Naive thymus-derived CD4-positive, alpha-beta T cell (primary cell): ENCODE measurements at regions of chr6 and their contacts with region 1.

Region 1: DNA sequence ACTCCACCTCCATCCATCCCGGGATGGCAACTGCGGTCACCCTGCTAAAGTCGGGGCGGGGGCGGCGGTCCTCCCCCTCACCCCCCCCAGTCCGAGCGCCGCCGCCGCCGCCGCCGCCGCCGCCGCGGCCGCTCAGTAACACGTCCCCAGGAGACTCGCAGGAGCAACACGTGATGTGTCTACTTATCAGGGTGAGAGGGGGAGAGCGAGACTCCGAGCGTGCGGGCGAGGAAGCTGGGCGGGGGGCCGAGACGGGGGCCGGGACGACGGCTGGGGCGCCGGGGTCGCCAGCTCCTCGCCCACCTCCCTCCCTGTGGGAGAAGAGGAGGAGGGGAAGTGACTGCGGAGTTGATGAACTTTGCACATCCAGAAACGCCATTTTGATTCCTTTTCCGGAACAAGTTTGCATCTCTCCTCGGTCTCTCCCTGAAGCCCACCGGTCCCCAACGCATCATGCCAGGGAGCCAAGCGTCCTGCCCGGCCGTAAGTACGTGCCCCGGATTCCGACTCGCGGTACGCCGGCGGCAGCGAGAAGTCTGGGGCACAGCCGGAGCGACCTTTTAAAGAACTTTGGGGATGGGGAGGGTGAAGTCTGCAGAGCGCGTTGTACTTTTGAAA is at the start of gene RREB1:
- DNase-seq: peak; percentile 37 to 68 (median 60)
- ATAC-seq: peak; percentile 70
- H3K4me3 ChIP-seq: peak within 1 kb of the TSS; percentile 90
- H3K4me3 Mint-ChIP-seq: peak within 1 kb of the TSS; percentile 84 to 97 (median 95)
- H3K27ac ChIP-seq: peak within 1 kb of the TSS; percentile 82
- H3K27ac Mint-ChIP-seq: peak within 1 kb of the TSS; percentile 88 to 98 (median 95)
- H3K4me1 ChIP-seq: peaks cover 13 to 24% of the 10 kb centered on the region in 2 donors
- H3K4me1 Mint-ChIP-seq: peaks cover 26 to 41% (median 38%) of the 10 kb centered on the region in 7 donors
- H3K27me3 ChIP-seq: no peaks in the 10 kb centered on the region
- H3K27me3 Mint-ChIP-seq: peaks cover 0 to 7% (median 0%) of the 10 kb centered on the region in 5 donors
- total RNA-seq, gene RREB1: 28.3 to 56.7 (median 51.6) TPM

Region 2: DNA sequence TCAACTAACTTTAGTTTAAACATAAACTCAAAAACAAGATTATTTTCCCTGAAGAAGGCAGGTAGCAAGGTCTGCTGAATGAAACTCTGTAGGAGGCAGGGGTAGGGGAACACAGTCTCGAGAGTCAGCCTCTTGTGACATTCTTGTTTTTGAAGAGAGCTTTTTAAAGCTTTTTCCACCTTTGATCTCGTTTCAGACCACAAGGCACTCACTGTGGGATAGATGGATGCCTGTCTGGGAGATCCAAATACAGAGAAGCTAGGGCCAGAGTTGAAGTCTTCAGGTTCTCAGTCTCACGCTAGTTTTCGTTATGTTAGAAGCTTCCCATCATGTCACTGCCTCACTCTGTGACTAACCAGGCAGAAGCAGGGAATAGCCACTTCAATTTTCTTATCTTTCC is 802.1 kb before region 1 on chr6:
- CTCF ChIA-PET with region 1: no interaction called
- POLR2A ChIA-PET with region 1: no interaction called
- intact Hi-C with region 1: no loop called
- DNase-seq: no peak
- ATAC-seq: no peak
- H3K4me3 ChIP-seq: no peak overlapping the region
- H3K4me3 Mint-ChIP-seq: no peak overlapping the region
- H3K27ac ChIP-seq: no peak overlapping the region
- H3K27ac Mint-ChIP-seq: no peak overlapping the region
- H3K4me1 ChIP-seq: no peaks in the 10 kb centered on the region
- H3K4me1 Mint-ChIP-seq: no peaks in the 10 kb centered on the region
- H3K27me3 ChIP-seq: no peaks in the 10 kb centered on the region
- H3K27me3 Mint-ChIP-seq: peaks cover 12 to 48% (median 25%) of the 10 kb centered on the region in 5 donors

Region 3: DNA sequence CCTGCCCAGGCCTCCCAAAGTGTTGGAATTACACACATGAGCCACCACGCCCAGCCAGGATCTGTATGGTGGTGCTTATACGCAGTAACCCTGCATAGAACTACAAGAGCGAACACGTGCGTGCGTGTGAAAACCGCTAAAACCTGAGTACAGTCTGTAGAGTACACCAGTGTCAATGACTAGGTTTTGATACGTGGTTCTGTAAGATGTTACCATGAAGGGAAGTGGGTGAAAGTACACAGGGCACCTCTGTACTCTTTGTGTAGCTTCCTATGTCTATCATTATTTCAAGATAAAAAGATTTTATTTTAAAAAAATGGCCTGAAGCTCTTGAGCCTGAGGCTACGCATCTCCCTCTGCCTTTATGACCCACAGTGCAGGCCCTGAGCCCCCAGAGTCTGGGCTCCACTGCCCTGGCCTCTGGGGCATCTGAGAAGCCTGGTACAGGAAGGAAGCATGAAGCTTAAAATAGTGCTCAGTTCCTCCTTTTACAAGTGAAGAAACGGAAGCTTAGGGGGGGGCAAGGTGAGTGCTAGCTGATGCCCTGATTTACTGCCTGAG is 497.6 kb before region 1 on chr6:
- CTCF ChIA-PET with region 1: no interaction called
- POLR2A ChIA-PET with region 1: no interaction called
- intact Hi-C with region 1: loop called in 1 of 2 experiments (anchors 5 kb)
- DNase-seq: peak in 7 of 9 donors; percentile 70 to 88 (median 81)
- ATAC-seq: peak; percentile 84
- H3K4me3 ChIP-seq: peak overlapping the region; percentile 25
- H3K4me3 Mint-ChIP-seq: peak overlapping the region; percentile 29 to 83 (median 72)
- H3K27ac ChIP-seq: peak overlapping the region; percentile 65
- H3K27ac Mint-ChIP-seq: peak overlapping the region; percentile 81 to 100 (median 96)
- H3K4me1 ChIP-seq: peaks cover 51 to 61% of the 10 kb centered on the region in 2 donors
- H3K4me1 Mint-ChIP-seq: peaks cover 45 to 86% (median 68%) of the 10 kb centered on the region in 7 donors
- H3K27me3 ChIP-seq: no peaks in the 10 kb centered on the region
- H3K27me3 Mint-ChIP-seq: no peaks in the 10 kb centered on the region

Region 4: DNA sequence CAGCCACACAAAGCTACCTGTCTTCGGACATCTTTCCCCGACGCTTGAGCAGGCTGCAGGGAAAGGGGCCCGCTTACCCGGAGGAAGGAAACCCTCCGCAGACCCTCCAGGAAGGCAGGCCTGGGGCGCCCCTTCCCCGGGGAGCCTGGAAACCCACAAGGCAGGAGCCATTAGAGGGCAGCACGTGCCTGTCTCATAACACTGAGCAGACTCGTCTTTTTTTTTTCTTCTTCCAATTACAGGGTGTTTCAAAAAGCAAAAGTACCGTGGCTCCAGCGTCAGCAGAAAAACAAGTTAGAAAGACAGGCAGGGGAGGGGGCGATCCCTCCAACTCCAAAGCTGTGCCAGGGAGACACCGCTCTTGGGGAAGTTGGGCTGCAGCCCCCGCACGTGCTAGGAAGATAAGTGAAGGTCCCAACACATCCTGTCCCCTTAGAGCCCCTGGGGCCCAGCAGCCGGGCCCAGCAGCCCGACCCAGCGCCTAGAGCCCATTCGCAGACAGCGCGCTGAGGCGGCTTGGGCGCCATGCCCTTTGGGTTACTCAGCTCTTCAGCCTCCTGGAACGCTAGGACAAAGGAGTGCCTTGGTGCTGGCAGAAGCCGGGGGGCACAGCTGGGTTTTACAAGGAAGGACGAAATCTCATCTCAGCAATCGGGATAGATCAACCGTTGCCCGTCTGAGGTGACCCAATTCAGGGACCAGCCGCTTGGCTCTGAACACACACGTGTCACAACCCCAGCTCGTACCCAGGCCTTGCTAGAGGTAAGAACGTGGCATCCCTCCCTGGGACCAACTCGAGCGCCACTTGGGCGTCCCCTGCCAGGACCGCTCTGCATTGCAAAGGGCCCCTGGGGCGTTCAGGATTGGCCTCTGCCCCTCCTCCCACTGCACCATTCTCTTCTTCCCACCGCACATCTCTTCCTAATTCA is 382.9 kb before region 1 on chr6:
- CTCF ChIA-PET with region 1: no interaction called
- POLR2A ChIA-PET with region 1: no interaction called
- intact Hi-C with region 1: loop called in 1 of 2 experiments (anchors 2 kb)
- DNase-seq: peak; percentile 33 to 74 (median 62)
- ATAC-seq: peak; percentile 82
- H3K4me3 ChIP-seq: peak overlapping the region; percentile 44
- H3K4me3 Mint-ChIP-seq: peak overlapping the region; percentile 67 to 89 (median 81)
- H3K27ac ChIP-seq: no peak overlapping the region
- H3K27ac Mint-ChIP-seq: peak overlapping the region; percentile 47 to 84 (median 74)
- H3K4me1 ChIP-seq: peaks cover 0 to 5% of the 10 kb centered on the region in 2 donors
- H3K4me1 Mint-ChIP-seq: peaks cover 6 to 28% (median 12%) of the 10 kb centered on the region in 7 donors
- H3K27me3 ChIP-seq: no peaks in the 10 kb centered on the region
- H3K27me3 Mint-ChIP-seq: peaks cover 0 to 43% (median 0%) of the 10 kb centered on the region in 5 donors

Region 5: DNA sequence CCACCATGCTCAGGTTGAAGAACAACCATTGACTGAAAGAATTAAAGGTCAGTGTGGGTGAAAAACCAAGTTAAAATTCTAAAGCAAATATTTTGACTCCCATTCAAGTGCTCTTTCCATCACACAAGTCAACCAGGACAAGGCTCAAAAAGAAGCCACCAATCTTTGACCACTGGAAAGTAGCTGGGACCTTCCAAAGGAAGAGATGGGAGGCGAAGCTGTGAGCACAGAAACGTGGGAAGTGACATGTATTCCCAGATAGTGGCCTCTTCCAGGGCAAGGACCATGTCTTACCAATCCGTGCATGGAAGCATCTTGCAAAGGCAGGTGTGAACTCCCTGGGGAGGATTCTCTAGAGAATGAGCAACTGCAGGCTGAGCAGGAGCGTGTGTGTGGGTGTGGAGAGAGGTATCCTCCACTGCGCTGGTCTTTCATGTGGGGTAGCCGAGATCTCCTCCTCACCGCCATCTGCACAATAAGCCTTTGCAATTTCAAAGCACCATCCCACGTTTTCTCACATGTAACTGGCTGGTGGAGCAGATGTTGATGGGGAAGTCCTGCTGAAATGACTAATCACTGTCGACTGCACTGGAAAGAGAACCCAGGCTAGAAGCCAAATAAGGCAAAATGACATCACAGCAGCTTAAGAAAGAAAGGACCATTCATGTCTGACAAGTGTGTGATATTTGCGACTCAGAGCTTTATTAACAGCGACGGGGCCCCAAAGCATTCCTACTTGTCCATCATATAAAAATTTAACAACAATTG is 189.3 kb before region 1 on chr6:
- CTCF ChIA-PET with region 1: no interaction called
- POLR2A ChIA-PET with region 1: no interaction called
- intact Hi-C with region 1: loop called in 1 of 2 experiments (anchors 5 kb)
- DNase-seq: peak in 5 of 9 donors; percentile 12 to 74 (median 19)
- ATAC-seq: peak; percentile 77
- H3K4me3 ChIP-seq: no peak overlapping the region
- H3K4me3 Mint-ChIP-seq: peak overlapping the region in 1 of 10 donors; percentile 8
- H3K27ac ChIP-seq: no peak overlapping the region
- H3K27ac Mint-ChIP-seq: peak overlapping the region in 1 of 9 donors; percentile 46
- H3K4me1 ChIP-seq: peaks cover 0 to 10% of the 10 kb centered on the region in 2 donors
- H3K4me1 Mint-ChIP-seq: peaks cover 7 to 25% (median 20%) of the 10 kb centered on the region in 7 donors
- H3K27me3 ChIP-seq: no peaks in the 10 kb centered on the region
- H3K27me3 Mint-ChIP-seq: peaks cover 0 to 29% (median 0%) of the 10 kb centered on the region in 5 donors

Region 6: DNA sequence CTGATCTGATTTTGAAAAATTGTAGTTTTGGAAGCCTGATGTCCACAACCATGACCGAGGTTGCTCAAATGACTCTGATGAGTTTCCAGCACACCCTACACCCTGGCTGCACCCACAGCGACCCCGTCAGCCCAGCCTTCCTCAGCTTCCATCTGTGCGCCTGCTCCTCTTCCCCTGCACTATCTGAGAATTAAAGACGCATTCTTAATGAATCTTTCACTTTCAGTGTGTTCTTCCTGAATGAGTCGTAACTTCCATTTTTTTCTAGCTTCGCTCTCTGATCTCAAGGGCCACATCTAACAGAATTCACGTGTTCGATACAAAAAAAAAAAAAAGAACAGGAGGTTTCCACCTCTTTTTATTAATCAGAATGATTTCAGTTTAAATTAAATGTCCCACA is 21.2 kb before region 1 on chr6:
- CTCF ChIA-PET with region 1: interaction called, 9 read pairs
- POLR2A ChIA-PET with region 1: interaction called, 15 read pairs
- intact Hi-C with region 1: loop called (anchors 1 kb)
- DNase-seq: peak in 8 of 9 donors; percentile 10 to 62 (median 56)
- ATAC-seq: peak; percentile 79
- H3K4me3 ChIP-seq: peak overlapping the region; percentile 29
- H3K4me3 Mint-ChIP-seq: peak overlapping the region; percentile 77 to 93 (median 83)
- H3K27ac ChIP-seq: peak overlapping the region; percentile 58
- H3K27ac Mint-ChIP-seq: peak overlapping the region; percentile 62 to 95 (median 89)
- H3K4me1 ChIP-seq: peaks cover 20 to 27% of the 10 kb centered on the region in 2 donors
- H3K4me1 Mint-ChIP-seq: peaks cover 21 to 42% (median 39%) of the 10 kb centered on the region in 7 donors
- H3K27me3 ChIP-seq: no peaks in the 10 kb centered on the region
- H3K27me3 Mint-ChIP-seq: peaks cover 0 to 65% (median 0%) of the 10 kb centered on the region in 5 donors

Region 7: GRCh38 chr6:7145885-7146828 is 38.5 kb after region 1 on chr6:
- CTCF ChIA-PET with region 1: no interaction called
- POLR2A ChIA-PET with region 1: interaction called, 23 read pairs
- intact Hi-C with region 1: loop called in 1 of 2 experiments (anchors 1 kb)
- DNase-seq: no peak
- ATAC-seq: peak; percentile 71
- H3K4me3 ChIP-seq: peak overlapping the region; percentile 10
- H3K4me3 Mint-ChIP-seq: peak overlapping the region; percentile 70 to 83 (median 82)
- H3K27ac ChIP-seq: peak overlapping the region; percentile 63
- H3K27ac Mint-ChIP-seq: peak overlapping the region; percentile 55 to 96 (median 89)
- H3K4me1 ChIP-seq: peaks cover 17 to 27% of the 10 kb centered on the region in 2 donors
- H3K4me1 Mint-ChIP-seq: peaks cover 50 to 89% (median 76%) of the 10 kb centered on the region in 7 donors
- H3K27me3 ChIP-seq: no peaks in the 10 kb centered on the region
- H3K27me3 Mint-ChIP-seq: no peaks in the 10 kb centered on the region

Region 8: DNA sequence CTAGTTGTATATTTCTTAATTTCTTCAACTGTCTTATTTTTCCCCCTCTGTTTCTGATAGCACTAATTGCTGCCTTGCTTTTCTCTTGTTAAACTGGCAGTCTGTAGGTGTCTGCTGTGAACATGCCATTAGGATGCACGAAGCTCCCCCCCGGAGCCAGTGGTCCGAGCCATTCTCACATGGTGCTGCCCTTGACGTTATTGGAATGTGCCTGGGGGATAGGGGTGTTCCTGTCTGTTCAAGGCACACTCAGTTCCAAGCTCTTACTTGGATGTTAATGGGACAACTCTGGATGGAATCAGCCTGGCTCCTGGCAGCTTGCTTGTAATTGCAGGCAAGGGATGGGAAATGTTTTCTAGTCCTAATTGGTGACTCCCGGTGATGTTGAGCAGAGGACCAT is 68.5 kb after region 1 on chr6:
- CTCF ChIA-PET with region 1: no interaction called
- POLR2A ChIA-PET with region 1: no interaction called
- intact Hi-C with region 1: no loop called
- DNase-seq: no peak
- ATAC-seq: no peak
- H3K4me3 ChIP-seq: no peak overlapping the region
- H3K4me3 Mint-ChIP-seq: no peak overlapping the region
- H3K27ac ChIP-seq: no peak overlapping the region
- H3K27ac Mint-ChIP-seq: no peak overlapping the region
- H3K4me1 ChIP-seq: no peaks in the 10 kb centered on the region
- H3K4me1 Mint-ChIP-seq: peaks cover 5 to 24% (median 19%) of the 10 kb centered on the region in 7 donors
- H3K27me3 ChIP-seq: no peaks in the 10 kb centered on the region
- H3K27me3 Mint-ChIP-seq: no peaks in the 10 kb centered on the region

Region 9: GRCh38 chr6:7312616-7313504 is 205.2 kb after region 1 on chr6 and contains the start of gene SSR1:
- CTCF ChIA-PET with region 1: no interaction called
- POLR2A ChIA-PET with region 1: no interaction called
- intact Hi-C with region 1: loop called in 1 of 2 experiments (anchors 2 kb)
- DNase-seq: peak; percentile 76 to 97 (median 84)
- ATAC-seq: peak; percentile 99
- H3K4me3 ChIP-seq: peak within 1 kb of the TSS; percentile 66
- H3K4me3 Mint-ChIP-seq: peak within 1 kb of the TSS; percentile 83 to 99 (median 94)
- H3K27ac ChIP-seq: peak within 1 kb of the TSS; percentile 76
- H3K27ac Mint-ChIP-seq: peak within 1 kb of the TSS; percentile 87 to 93 (median 92)
- H3K4me1 ChIP-seq: peaks cover 6 to 27% of the 10 kb centered on the region in 2 donors
- H3K4me1 Mint-ChIP-seq: peaks cover 31 to 65% (median 50%) of the 10 kb centered on the region in 7 donors
- H3K27me3 ChIP-seq: no peaks in the 10 kb centered on the region
- H3K27me3 Mint-ChIP-seq: no peaks in the 10 kb centered on the region
- total RNA-seq, gene SSR1: 75.0 to 178 (median 127) TPM